CD8-positive, alpha-beta T cell (primary cell): ENCODE measurements at regions of chr7 and their contacts with region 1.

Region 1: GRCh38 chr7:44606450-44607254 is at the start of gene OGDH:
- DNase-seq: peak; percentile 98 to 100 (median 99)
- ATAC-seq: peak; percentile 92
- H3K4me3 ChIP-seq: peak within 1 kb of the TSS; percentile 87 to 90
- H3K4me3 Mint-ChIP-seq: peak within 1 kb of the TSS; percentile 99
- H3K27ac ChIP-seq: peak within 1 kb of the TSS; percentile 96 to 98
- H3K27ac Mint-ChIP-seq: peak within 1 kb of the TSS; percentile 100
- H3K4me1 ChIP-seq: peaks cover 30% of the 10 kb centered on the region
- H3K4me1 Mint-ChIP-seq: peaks cover 34% of the 10 kb centered on the region
- H3K27me3 ChIP-seq: no peaks in the 10 kb centered on the region
- H3K27me3 Mint-ChIP-seq: no peaks in the 10 kb centered on the region
- CTCF ChIP-seq: no peak
- total RNA-seq, gene OGDH: 36.8 to 39.6 TPM

Region 2: GRCh38 chr7:44573464-44574286 is 33.0 kb before region 1 on chr7 and contains the start of gene DDX56:
- CTCF ChIA-PET with region 1: interaction called, 3 read pairs
- POLR2A ChIA-PET with region 1: interaction called, 7 read pairs
- intact Hi-C with region 1: loop called in 1 of 2 experiments (anchors 1 kb)
- DNase-seq: peak; percentile 75 to 96 (median 93)
- ATAC-seq: peak; percentile 96
- H3K4me3 ChIP-seq: peak within 1 kb of the TSS; percentile 92 to 94
- H3K4me3 Mint-ChIP-seq: peak within 1 kb of the TSS; percentile 96
- H3K27ac ChIP-seq: peak within 1 kb of the TSS; percentile 91 to 94
- H3K27ac Mint-ChIP-seq: peak within 1 kb of the TSS; percentile 99
- H3K4me1 ChIP-seq: peaks cover 28% of the 10 kb centered on the region
- H3K4me1 Mint-ChIP-seq: peaks cover 51% of the 10 kb centered on the region
- H3K27me3 ChIP-seq: no peaks in the 10 kb centered on the region
- H3K27me3 Mint-ChIP-seq: no peaks in the 10 kb centered on the region
- CTCF ChIP-seq: no peak
- total RNA-seq, gene DDX56: 140 to 141 TPM

Region 3: DNA sequence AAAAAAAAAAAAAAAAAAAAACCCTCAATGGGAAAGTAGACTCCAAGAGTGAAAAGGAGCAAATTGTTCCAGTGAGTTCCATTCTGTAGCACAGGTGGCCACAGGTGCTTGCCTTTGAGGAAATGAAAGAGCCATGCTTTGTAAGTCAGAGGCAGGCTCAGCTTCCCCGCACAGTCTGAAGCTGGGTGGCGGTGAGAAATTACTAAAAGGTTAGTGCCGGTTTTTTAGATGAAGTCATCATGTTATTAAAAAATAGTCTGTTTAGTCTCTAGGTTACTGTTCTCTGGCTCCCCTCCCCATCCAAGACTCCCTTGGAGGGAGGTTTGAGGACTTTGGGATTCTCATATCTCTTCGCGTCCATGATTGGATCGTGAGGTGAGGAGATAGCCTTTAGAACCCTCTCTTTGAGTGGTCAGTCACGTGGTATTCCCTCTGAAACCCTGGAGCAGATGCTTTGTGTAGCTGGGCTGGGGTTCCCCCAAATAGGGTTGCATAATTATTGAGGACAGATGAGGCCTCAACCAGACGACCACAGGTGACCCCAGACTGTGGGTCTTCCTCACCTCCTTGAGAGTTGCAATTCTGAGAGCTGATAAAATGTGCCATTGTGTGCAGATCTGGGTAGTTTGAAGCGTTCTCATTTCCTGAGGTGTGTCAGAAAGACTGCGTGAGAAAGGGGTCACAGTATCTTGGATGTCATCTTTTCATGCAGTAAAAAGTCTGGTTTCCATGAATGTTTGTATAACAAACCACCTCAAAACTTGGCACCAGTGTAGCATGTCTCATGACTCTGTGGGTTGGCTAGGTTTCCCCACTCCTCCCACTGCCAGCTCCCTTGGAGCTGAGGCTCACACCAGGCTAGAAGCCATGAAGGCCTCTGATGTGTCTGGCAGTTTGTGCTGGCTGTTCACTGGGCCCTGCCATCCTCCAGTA is 26.9 kb after region 1 on chr7:
- CTCF ChIA-PET with region 1: interaction called, 13 read pairs
- POLR2A ChIA-PET with region 1: interaction called, 50 read pairs
- intact Hi-C with region 1: no loop called
- DNase-seq: peak in 5 of 9 experiments; percentile 50 to 85 (median 77)
- ATAC-seq: peak; percentile 42
- H3K4me3 ChIP-seq: no peak overlapping the region
- H3K4me3 Mint-ChIP-seq: peak overlapping the region; percentile 22
- H3K27ac ChIP-seq: peak overlapping the region; percentile 35 to 74
- H3K27ac Mint-ChIP-seq: peak overlapping the region; percentile 99
- H3K4me1 ChIP-seq: peaks cover 75% of the 10 kb centered on the region
- H3K4me1 Mint-ChIP-seq: peaks cover 83% of the 10 kb centered on the region
- H3K27me3 ChIP-seq: no peaks in the 10 kb centered on the region
- H3K27me3 Mint-ChIP-seq: no peaks in the 10 kb centered on the region
- CTCF ChIP-seq: no peak

Region 4: GRCh38 chr7:44748045-44748947 is 141.6 kb after region 1 on chr7 and contains the start of gene ZMIZ2:
- CTCF ChIA-PET with region 1: interaction called, 3 read pairs
- POLR2A ChIA-PET with region 1: interaction called, 24 read pairs
- intact Hi-C with region 1: loop called (anchors 1 kb)
- DNase-seq: peak; percentile 84 to 98 (median 92)
- ATAC-seq: peak; percentile 91
- H3K4me3 ChIP-seq: peak within 1 kb of the TSS; percentile 77 to 80
- H3K4me3 Mint-ChIP-seq: peak within 1 kb of the TSS; percentile 79
- H3K27ac ChIP-seq: peak within 1 kb of the TSS; percentile 83
- H3K27ac Mint-ChIP-seq: peak within 1 kb of the TSS; percentile 90
- H3K4me1 ChIP-seq: peaks cover 27% of the 10 kb centered on the region
- H3K4me1 Mint-ChIP-seq: peaks cover 35% of the 10 kb centered on the region
- H3K27me3 ChIP-seq: no peaks in the 10 kb centered on the region
- H3K27me3 Mint-ChIP-seq: no peaks in the 10 kb centered on the region
- CTCF ChIP-seq: no peak
- total RNA-seq, gene ZMIZ2: 67.1 to 71.3 TPM

Region 5: DNA sequence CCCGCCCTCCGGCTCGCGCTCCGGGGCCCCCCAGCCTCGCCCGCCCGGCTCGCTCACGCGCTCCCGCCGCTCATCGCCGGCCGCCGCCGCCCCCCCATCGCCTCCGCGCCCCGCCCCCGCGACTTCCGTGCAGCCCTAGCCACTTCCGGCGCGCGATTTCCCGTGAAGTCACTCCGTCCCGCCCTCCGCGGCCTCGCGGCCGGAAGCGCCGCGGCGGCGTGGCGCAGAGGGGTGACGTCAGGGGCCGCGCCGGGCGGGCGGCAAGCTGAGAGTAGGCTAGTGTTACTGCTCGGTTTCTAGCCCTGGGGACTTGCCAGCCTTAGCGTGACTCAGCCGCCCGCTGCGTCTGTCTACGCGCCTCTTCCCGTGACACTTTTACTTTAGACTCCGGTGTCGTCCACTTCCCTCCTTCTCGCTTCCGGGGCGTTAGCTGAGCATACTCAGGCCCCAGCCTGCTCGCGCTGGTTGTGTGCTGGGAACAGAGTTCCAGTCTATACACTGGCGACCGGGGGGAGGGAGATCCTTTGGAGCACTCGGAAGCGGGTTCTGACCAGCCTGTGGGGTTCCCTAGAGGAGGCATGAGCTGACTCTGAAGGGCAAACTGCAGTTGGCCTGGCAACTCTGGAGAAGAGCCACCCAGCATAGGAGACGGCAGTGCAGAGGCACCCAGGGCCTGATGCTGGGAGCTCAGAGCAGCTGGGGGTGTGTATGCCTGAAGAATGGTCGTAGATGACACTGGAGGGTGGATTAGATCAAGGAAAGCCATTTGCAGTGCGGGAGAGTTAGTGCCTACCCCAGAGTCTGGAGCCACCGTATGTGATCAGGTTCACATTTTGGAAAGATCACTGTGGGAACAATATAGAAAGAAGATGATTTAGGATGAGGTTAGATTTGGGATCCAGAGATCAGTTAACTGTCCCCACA is 279.0 kb after region 1 on chr7 and contains the start of gene PURB:
- CTCF ChIA-PET with region 1: no interaction called
- POLR2A ChIA-PET with region 1: interaction called, 10 read pairs
- intact Hi-C with region 1: loop called (anchors 1 kb)
- DNase-seq: peak; percentile 94 to 99 (median 97)
- ATAC-seq: peak; percentile 86
- H3K4me3 ChIP-seq: peak within 1 kb of the TSS; percentile 64 to 67
- H3K4me3 Mint-ChIP-seq: peak within 1 kb of the TSS; percentile 92
- H3K27ac ChIP-seq: peak within 1 kb of the TSS; percentile 98 to 100
- H3K27ac Mint-ChIP-seq: peak within 1 kb of the TSS; percentile 99
- H3K4me1 ChIP-seq: peaks cover 36% of the 10 kb centered on the region
- H3K4me1 Mint-ChIP-seq: peaks cover 45% of the 10 kb centered on the region
- H3K27me3 ChIP-seq: no peaks in the 10 kb centered on the region
- H3K27me3 Mint-ChIP-seq: no peaks in the 10 kb centered on the region
- CTCF ChIP-seq: no peak
- total RNA-seq, gene PURB: 16.3 to 16.5 TPM

Region 6: DNA sequence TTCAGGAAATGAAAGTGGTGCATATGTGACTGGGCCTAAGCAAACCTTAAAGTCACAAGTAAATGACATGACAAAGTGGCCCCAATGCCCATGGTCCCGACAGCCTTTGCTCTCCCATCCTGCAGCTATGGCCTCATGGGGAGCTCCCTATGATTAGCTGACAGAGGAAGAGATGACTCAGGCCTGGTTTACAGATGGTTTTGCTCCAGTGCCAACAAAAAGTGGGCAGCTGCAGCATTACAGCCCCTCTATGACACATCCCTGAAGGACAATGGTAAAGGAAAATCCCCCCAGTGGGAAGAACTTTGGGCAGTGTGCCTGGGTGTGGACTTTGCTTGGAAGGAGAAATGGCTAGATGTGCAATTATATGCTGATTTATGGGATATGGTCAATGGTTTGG is 862.5 kb after region 1 on chr7:
- CTCF ChIA-PET with region 1: no interaction called
- POLR2A ChIA-PET with region 1: no interaction called
- intact Hi-C with region 1: no loop called
- DNase-seq: no peak
- ATAC-seq: no peak
- H3K4me3 ChIP-seq: no peak overlapping the region
- H3K4me3 Mint-ChIP-seq: no peak overlapping the region
- H3K27ac ChIP-seq: no peak overlapping the region
- H3K27ac Mint-ChIP-seq: no peak overlapping the region
- H3K4me1 ChIP-seq: no peaks in the 10 kb centered on the region
- H3K4me1 Mint-ChIP-seq: no peaks in the 10 kb centered on the region
- H3K27me3 ChIP-seq: no peaks in the 10 kb centered on the region
- H3K27me3 Mint-ChIP-seq: peaks cover 23% of the 10 kb centered on the region
- CTCF ChIP-seq: no peak